Activated naive CD8-positive, alpha-beta T cell treated with anti-CD3 and anti-CD28 coated beads, Interleukin-2, amount 10 ng/mL, durations not matched to agents 7 days and 5 days (primary cell): ENCODE measurements at regions of chr17 and their contacts with region 1.

Region 1: GRCh38 chr17:50719144-50719923 is at the start of gene LUC7L3:
- DNase-seq: peak; percentile 99
- ATAC-seq: peak; percentile 90
- H3K4me3 Mint-ChIP-seq: peak within 1 kb of the TSS; percentile 97
- H3K27ac Mint-ChIP-seq: peak within 1 kb of the TSS; percentile 99
- H3K4me1 Mint-ChIP-seq: peaks cover 18% of the 10 kb centered on the region
- H3K27me3 Mint-ChIP-seq: no peaks in the 10 kb centered on the region
- total RNA-seq, gene LUC7L3: 184 to 200 TPM

Region 2: DNA sequence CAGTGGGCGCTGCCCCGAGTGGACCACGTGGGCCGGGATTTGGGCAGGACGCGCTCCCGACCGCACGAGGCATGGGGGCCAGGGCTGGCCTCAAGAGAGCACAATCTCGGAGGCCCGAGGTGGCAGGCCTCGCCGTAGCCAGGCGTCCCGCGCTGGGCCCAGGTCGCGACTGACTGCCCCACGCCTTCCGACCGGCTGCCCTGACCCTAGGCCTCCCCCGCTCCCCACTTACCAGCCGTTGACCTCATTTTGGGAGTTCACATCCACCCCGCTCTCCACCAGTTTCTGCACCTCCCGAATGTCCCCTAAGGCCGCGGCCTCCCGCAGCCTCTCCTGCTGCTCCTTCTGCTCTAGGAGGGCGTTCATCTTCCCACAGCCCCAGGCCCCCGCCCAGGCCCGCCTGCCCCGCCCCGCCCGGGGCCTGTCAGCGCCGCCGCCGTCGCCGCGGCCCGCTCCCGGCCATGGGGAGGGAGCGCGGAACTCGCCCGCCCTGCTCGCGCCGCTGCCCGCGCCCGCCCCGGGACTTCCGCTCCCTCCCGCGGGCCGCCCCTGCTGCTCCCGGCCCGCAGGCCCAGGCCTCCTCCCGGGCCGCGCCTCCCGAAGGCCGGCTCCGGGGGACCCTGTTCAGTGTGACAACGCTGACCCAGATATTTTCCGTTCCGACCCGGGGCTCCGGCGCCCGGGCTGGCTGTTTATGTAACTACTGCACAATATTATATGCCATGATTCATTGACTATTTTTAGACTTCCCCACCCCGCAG is 11.9 kb before region 1 on chr17 and contains the start of gene ANKRD40:
- POLR2A ChIA-PET with region 1: interaction called, 62 read pairs
- DNase-seq: peak; percentile 94
- ATAC-seq: peak; percentile 87
- H3K4me3 Mint-ChIP-seq: peak within 1 kb of the TSS; percentile 89
- H3K27ac Mint-ChIP-seq: peak within 1 kb of the TSS; percentile 97
- H3K4me1 Mint-ChIP-seq: peaks cover 29% of the 10 kb centered on the region
- H3K27me3 Mint-ChIP-seq: peaks cover 4% of the 10 kb centered on the region
- total RNA-seq, gene ANKRD40: 30.3 to 31.4 TPM

Region 3: GRCh38 chr17:50731575-50732460 is 12.5 kb after region 1 on chr17:
- POLR2A ChIA-PET with region 1: interaction called, 12 read pairs
- DNase-seq: no peak
- ATAC-seq: no peak
- H3K4me3 Mint-ChIP-seq: no peak overlapping the region
- H3K27ac Mint-ChIP-seq: peak overlapping the region; percentile 49
- H3K4me1 Mint-ChIP-seq: peaks cover 26% of the 10 kb centered on the region
- H3K27me3 Mint-ChIP-seq: no peaks in the 10 kb centered on the region